Gastrocnemius medialis (tissue), 4 donors: ENCODE measurements at regions of chr6 and their contacts with region 1.

Region 1: GRCh38 chr6:105272786-105273185 is 93.0 kb upstream of the POPDC3 start:
- DNase-seq: peak; percentile 71 to 89
- ATAC-seq: peak; percentile 68 to 80
- H3K4me3 ChIP-seq: no peak overlapping the region
- H3K27ac ChIP-seq: peak overlapping the region; percentile 87 to 98 (median 96)
- H3K4me1 ChIP-seq: peaks cover 51 to 56% of the 10 kb centered on the region in 2 donors
- H3K27me3 ChIP-seq: no peaks in the 10 kb centered on the region
- CTCF ChIP-seq: no peak
- POLR2A ChIP-seq: no peak

Region 2: GRCh38 chr6:105179244-105180065 is 93.3 kb before region 1 on chr6 and contains the start of gene POPDC3:
- in situ Hi-C with region 1: loop called in 1 of 4 experiments (anchors 5 kb)
- intact Hi-C with region 1: no loop called
- DNase-seq: peak; percentile 53 to 78
- ATAC-seq: peak; percentile 51 to 63
- H3K4me3 ChIP-seq: peak within 1 kb of the TSS; percentile 69 to 79 (median 77)
- H3K27ac ChIP-seq: peak within 1 kb of the TSS; percentile 96 to 99 (median 99)
- H3K4me1 ChIP-seq: peaks cover 19 to 50% of the 10 kb centered on the region in 2 donors
- H3K27me3 ChIP-seq: no peaks in the 10 kb centered on the region
- CTCF ChIP-seq: peak in 2 of 5 experiments; percentile 9 to 30
- POLR2A ChIP-seq: peak; percentile 28 to 65
- total RNA-seq, gene POPDC3: 105 to 218 (median 179) TPM